K562 (cell line): ENCODE measurements at regions of chr11 and their contacts with region 1.

Region 1: GRCh38 chr11:65078151-65078550 is 5.7 kb downstream of the CDCA5 start:
- DNase-seq: peak; percentile 62 to 75 (median 65)
- ATAC-seq: peak; percentile 93
- H3K4me3 ChIP-seq: no peak overlapping the region
- H3K27ac ChIP-seq: 0 out of 3 replicates have a peak overlapping the region, but pooled peaks have one; percentile 16
- H3K4me1 ChIP-seq: peaks cover 20 to 22% of the 10 kb centered on the region in 2 experiments; a peak in 4 of 5 replicates
- H3K27me3 ChIP-seq: no peaks in the 10 kb centered on the region
- CTCF ChIP-seq: peak; percentile 80 to 87 (median 83)
- EP300 ChIP-seq: no peak
- POLR2A ChIP-seq: no peak
- RAD21 ChIP-seq: peak; percentile 50 to 60

Region 2: GRCh38 chr11:64826578-64827450 is 251.3 kb before region 1 on chr11:
- CTCF ChIA-PET with region 1: no interaction called
- POLR2A ChIA-PET with region 1: no interaction called
- in situ Hi-C with region 1: no loop called
- intact Hi-C with region 1: no loop called
- DNase-seq: peak in 1 of 4 experiments; percentile 42
- ATAC-seq: no peak
- H3K4me3 ChIP-seq: no peak overlapping the region
- H3K27ac ChIP-seq: no peak overlapping the region
- H3K4me1 ChIP-seq: peaks cover 10 to 42% of the 10 kb centered on the region in 2 experiments; a peak in 4 of 5 replicates
- H3K27me3 ChIP-seq: no peaks in the 10 kb centered on the region
- CTCF ChIP-seq: no peak
- EP300 ChIP-seq: no peak
- POLR2A ChIP-seq: no peak
- RAD21 ChIP-seq: no peak

Region 3: DNA sequence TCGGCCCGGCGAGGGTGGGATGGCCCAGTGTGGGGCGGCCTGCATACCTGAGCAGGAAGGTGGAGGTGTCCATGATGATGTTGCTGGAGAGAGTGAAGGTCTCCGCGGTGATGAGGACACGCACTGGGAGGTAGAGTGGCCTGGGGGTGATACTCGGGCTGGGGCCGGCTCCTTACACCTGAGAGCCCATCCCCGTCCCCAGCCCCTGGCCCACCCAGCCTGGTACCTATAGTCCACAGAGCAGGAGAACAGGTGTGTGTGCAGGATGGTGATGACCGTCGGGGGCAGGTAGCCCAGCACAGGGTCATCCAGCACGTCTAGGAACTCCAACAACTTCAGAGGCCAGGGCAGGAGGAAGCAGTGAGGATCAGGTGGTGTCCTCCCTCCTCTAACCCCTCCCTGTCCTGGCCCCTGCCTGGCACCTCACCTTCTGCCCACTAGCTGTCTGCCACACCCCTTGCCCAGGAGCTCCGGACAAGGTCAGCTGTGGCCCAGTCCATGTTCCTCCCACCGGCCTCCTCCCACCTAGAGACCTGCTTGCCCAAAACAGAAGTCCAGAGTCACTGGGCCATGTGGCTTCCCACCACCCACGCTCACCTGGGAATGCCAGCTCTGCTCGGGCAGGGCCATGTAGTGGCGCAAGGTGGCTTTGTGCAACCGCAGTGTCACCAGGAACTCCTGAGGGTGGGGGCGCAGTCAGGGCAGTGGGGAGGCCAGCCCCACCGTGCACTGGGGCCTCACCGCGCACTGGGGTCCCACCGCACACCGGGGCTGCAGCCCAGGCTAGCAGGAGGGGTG is 172.4 kb before region 1 on chr11:
- CTCF ChIA-PET with region 1: no interaction called
- POLR2A ChIA-PET with region 1: no interaction called
- in situ Hi-C with region 1: no loop called
- intact Hi-C with region 1: no loop called
- DNase-seq: no peak
- ATAC-seq: no peak
- H3K4me3 ChIP-seq: no peak overlapping the region
- H3K27ac ChIP-seq: no peak overlapping the region
- H3K4me1 ChIP-seq: peaks cover 0 to 24% of the 10 kb centered on the region in 2 experiments; a peak in 2 of 5 replicates
- H3K27me3 ChIP-seq: no peaks in the 10 kb centered on the region
- CTCF ChIP-seq: no peak
- EP300 ChIP-seq: no peak
- POLR2A ChIP-seq: no peak
- RAD21 ChIP-seq: no peak

Region 4: DNA sequence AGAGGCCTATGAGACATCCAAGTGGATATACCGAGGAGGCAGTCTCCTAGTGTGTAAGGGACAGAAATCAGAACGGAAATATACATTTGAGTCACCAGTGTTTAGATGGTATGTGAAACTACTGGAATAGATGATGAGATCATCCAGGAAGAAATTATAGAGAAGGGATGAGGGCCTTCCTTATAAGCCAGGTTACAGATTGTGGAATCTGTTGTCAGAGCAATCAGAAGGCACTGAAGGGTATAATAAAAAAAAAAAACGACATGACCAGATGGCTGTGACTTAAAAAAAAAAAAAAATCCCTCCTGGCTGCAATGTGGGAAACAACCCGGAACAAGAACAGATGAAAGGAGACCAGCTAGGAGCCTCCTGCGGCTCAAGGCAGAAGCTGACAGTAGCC is 108.9 kb before region 1 on chr11:
- CTCF ChIA-PET with region 1: no interaction called
- POLR2A ChIA-PET with region 1: no interaction called
- in situ Hi-C with region 1: no loop called
- intact Hi-C with region 1: no loop called
- DNase-seq: no peak
- ATAC-seq: no peak
- H3K4me3 ChIP-seq: no peak overlapping the region
- H3K27ac ChIP-seq: no peak overlapping the region
- H3K4me1 ChIP-seq: peaks cover 4 to 12% of the 10 kb centered on the region in 2 experiments; a peak in 4 of 5 replicates
- H3K27me3 ChIP-seq: no peaks in the 10 kb centered on the region
- CTCF ChIP-seq: no peak
- EP300 ChIP-seq: no peak
- POLR2A ChIP-seq: no peak
- RAD21 ChIP-seq: no peak

Region 5: GRCh38 chr11:65047581-65048422 is 30.3 kb before region 1 on chr11:
- CTCF ChIA-PET with region 1: no interaction called
- POLR2A ChIA-PET with region 1: interaction called, 11 read pairs
- in situ Hi-C with region 1: no loop called
- intact Hi-C with region 1: no loop called
- DNase-seq: peak in 3 of 4 experiments; percentile 40 to 71 (median 68)
- ATAC-seq: peak; percentile 16; the same call in 1 of the 3 replicates
- H3K4me3 ChIP-seq: no peak overlapping the region
- H3K27ac ChIP-seq: no peak overlapping the region
- H3K4me1 ChIP-seq: peaks cover 6 to 50% of the 10 kb centered on the region in 2 experiments; a peak in 4 of 5 replicates
- H3K27me3 ChIP-seq: no peaks in the 10 kb centered on the region
- CTCF ChIP-seq: no peak
- EP300 ChIP-seq: no peak
- POLR2A ChIP-seq: no peak
- RAD21 ChIP-seq: no peak

Region 6: DNA sequence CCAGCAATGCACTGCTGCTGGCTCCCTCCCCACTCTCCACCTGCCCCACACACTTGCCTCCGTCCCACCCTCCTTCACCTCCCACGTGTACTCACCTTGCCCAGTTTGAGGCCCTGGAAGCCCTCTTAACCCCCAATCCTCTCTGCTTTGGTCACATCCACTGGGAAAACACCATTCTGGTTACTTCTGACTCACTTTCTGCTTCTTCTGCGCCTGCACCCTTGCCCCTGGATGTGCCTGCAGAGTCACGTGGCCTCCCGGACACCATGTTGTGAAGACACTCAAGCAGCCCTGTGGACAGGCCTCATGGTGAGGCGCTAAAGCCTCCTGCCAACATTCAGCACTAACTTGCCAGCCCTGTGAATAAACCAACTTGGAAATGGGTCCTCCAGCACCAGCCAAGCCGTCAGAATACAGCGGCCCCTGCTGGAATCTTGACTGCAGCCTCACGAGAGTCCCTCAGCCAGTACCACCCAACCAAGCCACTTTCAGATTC is 17.2 kb before region 1 on chr11:
- CTCF ChIA-PET with region 1: no interaction called
- POLR2A ChIA-PET with region 1: interaction called, 18 read pairs
- in situ Hi-C with region 1: no loop called
- intact Hi-C with region 1: no loop called
- DNase-seq: peak in 2 of 4 experiments; percentile 64
- ATAC-seq: peak; percentile 87
- H3K4me3 ChIP-seq: no peak overlapping the region
- H3K27ac ChIP-seq: 0 out of 3 replicates have a peak overlapping the region, but pooled peaks have one; percentile 2
- H3K4me1 ChIP-seq: peaks cover 16 to 26% of the 10 kb centered on the region in 2 experiments
- H3K27me3 ChIP-seq: no peaks in the 10 kb centered on the region
- CTCF ChIP-seq: peak; percentile 69 to 73 (median 72)
- EP300 ChIP-seq: no peak
- POLR2A ChIP-seq: no peak
- RAD21 ChIP-seq: peak; percentile 29 to 70

Region 7: GRCh38 chr11:65095974-65096806 is 18.0 kb after region 1 on chr11 and contains the start of gene VPS51:
- CTCF ChIA-PET with region 1: no interaction called
- POLR2A ChIA-PET with region 1: interaction called, 10 read pairs
- in situ Hi-C with region 1: no loop called
- intact Hi-C with region 1: no loop called
- DNase-seq: peak; percentile 93 to 96 (median 94)
- ATAC-seq: peak; percentile 100
- H3K4me3 ChIP-seq: peak within 1 kb of the TSS; percentile 78
- H3K27ac ChIP-seq: peak within 1 kb of the TSS; percentile 81
- H3K4me1 ChIP-seq: peaks cover 11 to 14% of the 10 kb centered on the region in 2 experiments; a peak in 4 of 5 replicates
- H3K27me3 ChIP-seq: no peaks in the 10 kb centered on the region
- CTCF ChIP-seq: 0 out of 6 replicates have a peak, but pooled peaks of 1 of the 3 experiments have one; percentile 7
- EP300 ChIP-seq: peak; percentile 70
- POLR2A ChIP-seq: peak; percentile 94
- RAD21 ChIP-seq: 0 out of 4 replicates have a peak, but pooled peaks of 1 of the 2 experiments have one; percentile 14
- polyA plus RNA-seq, gene VPS51: 1.8 to 2.9 TPM